SK-N-SH (cell line): ENCODE measurements at regions of chr17 and their contacts with region 1.

Region 1: DNA sequence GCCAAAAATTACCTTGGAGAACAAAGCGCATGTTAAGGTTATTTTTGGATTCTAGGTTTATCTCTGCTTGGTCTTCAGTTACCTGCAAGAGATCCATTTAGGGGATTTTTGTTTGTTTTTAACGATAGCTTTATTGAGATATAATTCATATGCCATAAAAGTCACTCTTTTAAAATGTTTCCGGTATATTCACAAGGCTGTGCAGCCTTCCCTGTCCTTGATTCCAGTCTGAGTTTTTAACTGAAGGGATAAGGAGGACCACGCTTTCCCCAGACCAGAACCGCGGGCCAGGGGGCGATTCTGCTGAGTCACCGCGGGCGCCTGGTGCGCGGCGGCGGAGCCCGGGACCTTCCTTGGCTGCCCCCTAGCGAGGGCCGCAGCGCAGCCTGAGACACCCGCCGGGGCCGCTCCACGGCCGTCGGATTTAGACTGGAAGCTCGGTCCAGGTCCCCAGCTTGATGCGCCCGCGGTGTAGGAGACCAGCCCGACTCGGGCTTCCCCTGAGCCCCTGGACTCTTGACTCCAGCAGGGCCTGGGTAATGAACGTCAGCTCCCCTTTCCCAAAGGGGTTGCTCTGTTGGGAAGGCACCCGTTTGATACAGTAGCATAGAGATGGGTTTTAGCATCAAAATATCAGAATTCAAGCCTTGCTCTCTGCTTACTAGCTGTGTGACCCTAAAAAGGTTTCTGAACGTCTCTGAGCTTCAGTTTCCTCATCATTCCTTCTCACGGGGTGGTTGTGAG is 50.0 kb upstream of the STH start:
- DNase-seq: no peak
- H3K4me3 ChIP-seq: no peak overlapping the region
- H3K27ac ChIP-seq: no peak overlapping the region
- H3K4me1 ChIP-seq: peaks cover 0 to 14% of the 10 kb centered on the region in 2 experiments; a peak in 1 of 4 replicates
- H3K27me3 ChIP-seq: peaks cover 28% of the 10 kb centered on the region; the same call in 1 of the 2 replicates
- CTCF ChIP-seq: no peak
- EP300 ChIP-seq: no peak
- RAD21 ChIP-seq: no peak

Region 2: GRCh38 chr17:45936610-45937009 is 12.4 kb before region 1 on chr17:
- CTCF ChIA-PET with region 1: interaction called, 13 read pairs
- POLR2A ChIA-PET with region 1: no interaction called
- DNase-seq: peak; percentile 47
- H3K4me3 ChIP-seq: no peak overlapping the region
- H3K27ac ChIP-seq: no peak overlapping the region
- H3K4me1 ChIP-seq: peaks cover 0 to 15% of the 10 kb centered on the region in 2 experiments; a peak in 1 of 4 replicates
- H3K27me3 ChIP-seq: peaks cover 48% of the 10 kb centered on the region
- CTCF ChIP-seq: no peak
- EP300 ChIP-seq: peak in 1 of 2 experiments; percentile 42; a peak in 1 of 4 replicates
- RAD21 ChIP-seq: 0 out of 2 replicates have a peak, but pooled peaks have one; percentile 3

Region 3: GRCh38 chr17:46125831-46126230 is 176.8 kb after region 1 on chr17:
- CTCF ChIA-PET with region 1: no interaction called
- POLR2A ChIA-PET with region 1: no interaction called
- DNase-seq: no peak
- H3K4me3 ChIP-seq: no peak overlapping the region
- H3K27ac ChIP-seq: no peak overlapping the region
- H3K4me1 ChIP-seq: peaks cover 11 to 18% of the 10 kb centered on the region in 2 experiments; a peak in 3 of 4 replicates
- H3K27me3 ChIP-seq: no peaks in the 10 kb centered on the region
- CTCF ChIP-seq: no peak
- EP300 ChIP-seq: no peak
- RAD21 ChIP-seq: no peak